Activated naive CD4-positive, alpha-beta T cell treated with anti-CD3 and anti-CD28 coated beads for 36 hours (primary cell): ENCODE measurements at regions of chr12 and their contacts with region 1.

Region 1: DNA sequence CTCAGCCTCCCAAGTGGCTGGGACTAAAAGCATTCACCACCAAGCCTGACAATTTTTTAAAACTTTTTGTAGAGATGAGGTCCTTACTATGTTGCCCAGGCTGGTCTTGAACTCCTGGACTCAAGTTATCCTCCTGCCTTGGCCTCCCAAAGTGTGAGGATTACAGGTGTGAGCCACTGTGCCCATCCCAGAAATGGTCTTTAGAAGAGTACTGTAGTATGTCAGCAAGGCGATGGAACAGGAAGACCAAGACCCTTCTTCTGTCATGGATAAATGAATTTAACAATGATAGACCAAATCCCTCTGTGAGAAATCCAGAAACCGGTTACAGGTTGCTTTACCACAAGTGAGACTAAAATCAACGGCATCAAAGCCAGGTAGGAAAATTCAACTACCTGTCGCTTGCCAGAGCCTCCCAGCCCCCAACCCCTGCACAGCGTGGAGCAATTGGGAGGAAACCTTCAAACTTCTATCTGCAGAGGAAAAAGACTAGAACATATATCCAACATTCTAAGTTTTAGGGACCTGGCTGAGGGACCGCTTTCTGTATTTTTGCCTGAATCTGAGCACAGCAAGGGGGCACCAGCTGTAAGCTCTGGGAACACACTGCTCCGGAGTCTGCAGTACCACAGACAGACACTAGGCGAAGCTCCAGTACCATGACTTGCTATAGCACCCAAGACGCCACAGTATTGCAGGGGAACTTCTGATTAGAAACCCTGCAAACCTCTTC is 51.3 kb downstream of the CPSF6 start:
- DNase-seq: peak; percentile 95
- H3K4me3 Mint-ChIP-seq: peak overlapping the region; percentile 5
- H3K27ac Mint-ChIP-seq: no peak overlapping the region
- H3K4me1 Mint-ChIP-seq: peaks cover 10% of the 10 kb centered on the region
- H3K27me3 Mint-ChIP-seq: peaks cover 5% of the 10 kb centered on the region

Region 2: GRCh38 chr12:69070319-69071090 is 220.2 kb before region 1 on chr12:
- CTCF ChIA-PET with region 1: no interaction called
- intact Hi-C with region 1: no loop called
- DNase-seq: peak; percentile 87
- H3K4me3 Mint-ChIP-seq: no peak overlapping the region
- H3K27ac Mint-ChIP-seq: no peak overlapping the region
- H3K4me1 Mint-ChIP-seq: peaks cover 38% of the 10 kb centered on the region
- H3K27me3 Mint-ChIP-seq: peaks cover 8% of the 10 kb centered on the region

Region 3: GRCh38 chr12:69254046-69254445 is 36.7 kb before region 1 on chr12:
- CTCF ChIA-PET with region 1: no interaction called
- intact Hi-C with region 1: no loop called
- DNase-seq: no peak
- H3K4me3 Mint-ChIP-seq: no peak overlapping the region
- H3K27ac Mint-ChIP-seq: peak overlapping the region; percentile 71
- H3K4me1 Mint-ChIP-seq: peaks cover 39% of the 10 kb centered on the region
- H3K27me3 Mint-ChIP-seq: no peaks in the 10 kb centered on the region

Region 4: GRCh38 chr12:69330475-69331473 is 40.1 kb after region 1 on chr12:
- CTCF ChIA-PET with region 1: interaction called, 12 read pairs
- intact Hi-C with region 1: loop called (anchors 1 kb)
- DNase-seq: peak; percentile 74
- H3K4me3 Mint-ChIP-seq: peak overlapping the region; percentile 80
- H3K27ac Mint-ChIP-seq: peak overlapping the region; percentile 90
- H3K4me1 Mint-ChIP-seq: peaks cover 60% of the 10 kb centered on the region
- H3K27me3 Mint-ChIP-seq: no peaks in the 10 kb centered on the region

Region 5: GRCh38 chr12:69470189-69471075 is 179.7 kb after region 1 on chr12 and contains the start of gene FRS2:
- CTCF ChIA-PET with region 1: interaction called, 4 read pairs
- intact Hi-C with region 1: loop called (anchors 5 kb)
- DNase-seq: peak; percentile 93
- H3K4me3 Mint-ChIP-seq: peak within 1 kb of the TSS; percentile 98
- H3K27ac Mint-ChIP-seq: peak within 1 kb of the TSS; percentile 96
- H3K4me1 Mint-ChIP-seq: peaks cover 42% of the 10 kb centered on the region
- H3K27me3 Mint-ChIP-seq: no peaks in the 10 kb centered on the region
- total RNA-seq, gene FRS2: 7.9 TPM

Region 6: GRCh38 chr12:69585189-69586062 is 294.7 kb after region 1 on chr12 and contains the start of gene CCT2:
- CTCF ChIA-PET with region 1: no interaction called
- intact Hi-C with region 1: loop called (anchors 5 kb)
- DNase-seq: peak; percentile 97
- H3K4me3 Mint-ChIP-seq: peak within 1 kb of the TSS; percentile 86
- H3K27ac Mint-ChIP-seq: peak within 1 kb of the TSS; percentile 92
- H3K4me1 Mint-ChIP-seq: peaks cover 27% of the 10 kb centered on the region
- H3K27me3 Mint-ChIP-seq: no peaks in the 10 kb centered on the region
- total RNA-seq, gene CCT2: 268 to 280 TPM

Region 7: GRCh38 chr12:69879041-69879960 is 588.6 kb after region 1 on chr12:
- CTCF ChIA-PET with region 1: interaction called, 3 read pairs
- intact Hi-C with region 1: loop called (anchors 10 kb)
- DNase-seq: peak; percentile 83
- H3K4me3 Mint-ChIP-seq: no peak overlapping the region
- H3K27ac Mint-ChIP-seq: no peak overlapping the region
- H3K4me1 Mint-ChIP-seq: peaks cover 4% of the 10 kb centered on the region
- H3K27me3 Mint-ChIP-seq: peaks cover 11% of the 10 kb centered on the region